Mammary epithelial cell (primary cell): ENCODE measurements at regions of chr7 and their contacts with region 1.

Region 1: GRCh38 chr7:142478479-142479072 is 220.7 kb upstream of the PRSS58 start:
- DNase-seq: peak; percentile 46
- H3K4me3 ChIP-seq: no peak overlapping the region
- H3K27ac ChIP-seq: no peak overlapping the region
- H3K4me1 ChIP-seq: peaks cover 21% of the 10 kb centered on the region
- H3K27me3 ChIP-seq: no peaks in the 10 kb centered on the region
- CTCF ChIP-seq: peak; percentile 71 to 76

Region 2: GRCh38 chr7:141874787-141875186 is 603.8 kb before region 1 on chr7:
- CTCF ChIA-PET with region 1: interaction called, 13 read pairs
- dilution Hi-C with region 1: no loop called
- in situ Hi-C with region 1: no loop called
- intact Hi-C with region 1: no loop called
- DNase-seq: peak; percentile 41
- H3K4me3 ChIP-seq: no peak overlapping the region
- H3K27ac ChIP-seq: no peak overlapping the region
- H3K4me1 ChIP-seq: no peaks in the 10 kb centered on the region
- H3K27me3 ChIP-seq: no peaks in the 10 kb centered on the region
- CTCF ChIP-seq: no peak

Region 3: GRCh38 chr7:142357953-142358520 is 120.5 kb before region 1 on chr7:
- CTCF ChIA-PET with region 1: no interaction called
- dilution Hi-C with region 1: no loop called
- in situ Hi-C with region 1: loop called in 1 of 2 experiments (anchors 10 kb)
- intact Hi-C with region 1: loop called (anchors 1 kb)
- DNase-seq: peak; percentile 65
- H3K4me3 ChIP-seq: no peak overlapping the region
- H3K27ac ChIP-seq: no peak overlapping the region
- H3K4me1 ChIP-seq: no peaks in the 10 kb centered on the region
- H3K27me3 ChIP-seq: no peaks in the 10 kb centered on the region
- CTCF ChIP-seq: peak; percentile 82 to 92

Region 4: DNA sequence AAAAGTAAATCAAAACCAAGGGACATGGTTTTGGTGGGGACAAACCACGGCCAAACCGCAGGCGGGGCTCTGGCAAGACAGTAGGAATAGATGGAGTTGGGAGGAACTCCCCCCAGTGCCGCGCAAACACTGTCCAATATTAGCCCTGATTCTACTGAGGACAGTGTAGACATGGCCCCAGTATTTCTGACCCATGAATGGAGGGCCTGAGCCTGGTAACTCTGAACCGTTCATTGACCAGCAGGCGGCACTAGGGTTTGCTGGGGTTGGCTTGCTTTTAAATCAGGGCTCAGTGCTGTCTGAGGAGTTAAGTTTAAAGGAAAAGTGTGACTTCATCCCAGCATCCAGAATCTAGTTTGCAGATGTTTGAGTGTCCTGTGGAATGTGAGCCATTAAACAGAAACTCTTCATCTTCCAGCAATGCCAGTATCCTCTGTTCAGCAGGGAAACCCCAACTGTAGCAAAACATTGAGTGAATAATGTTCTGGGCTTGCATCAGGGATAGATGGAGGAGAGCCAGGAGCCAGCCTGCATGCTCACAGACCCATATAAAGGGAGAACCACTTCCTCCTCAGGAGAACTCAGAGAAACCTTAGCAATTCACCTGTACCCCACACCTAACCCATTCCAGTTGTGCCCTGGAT is 73.3 kb before region 1 on chr7:
- CTCF ChIA-PET with region 1: no interaction called
- dilution Hi-C with region 1: no loop called
- in situ Hi-C with region 1: no loop called
- intact Hi-C with region 1: no loop called
- DNase-seq: no peak
- H3K4me3 ChIP-seq: no peak overlapping the region
- H3K27ac ChIP-seq: no peak overlapping the region
- H3K4me1 ChIP-seq: no peaks in the 10 kb centered on the region
- H3K27me3 ChIP-seq: no peaks in the 10 kb centered on the region
- CTCF ChIP-seq: no peak

Region 5: DNA sequence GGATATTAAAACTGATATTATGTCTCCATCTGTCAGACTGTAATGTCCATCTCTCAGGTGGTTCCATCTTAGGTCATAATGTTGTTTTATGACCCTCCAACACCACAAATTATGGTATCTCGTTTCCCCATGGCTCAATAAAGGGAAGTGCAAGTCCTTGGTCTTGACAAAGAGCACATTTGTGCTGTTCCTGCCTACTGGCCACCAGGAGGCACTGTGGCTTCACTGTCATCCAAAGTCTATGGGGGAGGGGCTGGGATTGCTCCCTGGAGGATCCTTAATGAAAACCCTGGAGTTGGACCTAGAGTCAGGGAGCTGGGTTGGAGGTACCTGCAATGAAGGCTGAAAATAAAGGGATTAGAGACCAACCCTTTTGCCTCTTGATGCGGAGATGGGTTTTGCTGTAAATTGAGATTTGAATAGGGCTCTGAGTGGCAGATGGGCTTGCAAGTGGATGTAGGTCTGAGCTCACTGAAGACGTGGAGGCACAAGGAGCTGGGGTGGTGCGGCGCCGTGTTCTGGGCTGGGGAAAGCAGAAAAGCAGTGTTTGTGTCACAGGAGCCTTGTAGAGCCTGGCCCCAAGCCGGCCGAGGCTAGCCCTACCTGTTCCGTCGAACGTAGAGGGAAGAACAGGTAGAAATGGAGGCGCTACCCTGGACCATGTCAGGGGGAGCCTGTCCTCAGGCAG is 40.2 kb before region 1 on chr7:
- CTCF ChIA-PET with region 1: interaction called, 7 read pairs
- dilution Hi-C with region 1: no loop called
- in situ Hi-C with region 1: no loop called
- intact Hi-C with region 1: loop called (anchors 5 kb)
- DNase-seq: peak; percentile 37
- H3K4me3 ChIP-seq: no peak overlapping the region
- H3K27ac ChIP-seq: no peak overlapping the region
- H3K4me1 ChIP-seq: peaks cover 19% of the 10 kb centered on the region
- H3K27me3 ChIP-seq: no peaks in the 10 kb centered on the region
- CTCF ChIP-seq: peak; percentile 79 to 97

Region 6: DNA sequence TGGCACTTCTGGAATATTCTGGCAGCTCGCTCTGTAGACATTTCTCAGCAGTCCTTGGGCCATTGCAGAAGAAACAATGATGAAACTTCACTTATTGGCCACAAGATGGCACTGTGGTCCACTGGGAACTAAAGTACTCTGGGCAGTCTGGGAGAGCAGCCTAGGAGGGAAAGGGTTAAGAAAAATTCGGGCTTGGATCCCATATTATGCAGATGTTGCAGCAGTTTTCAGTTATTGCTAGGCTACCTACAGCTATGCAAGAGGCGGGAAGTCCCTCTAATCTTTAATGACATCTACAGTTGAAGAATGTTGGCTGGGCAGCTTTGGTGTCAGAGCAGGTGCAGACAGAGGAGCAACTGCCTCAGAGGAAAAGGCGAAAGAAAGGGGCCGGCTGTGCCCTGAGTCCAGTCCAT is 19.0 kb before region 1 on chr7:
- CTCF ChIA-PET with region 1: interaction called, 3 read pairs
- dilution Hi-C with region 1: no loop called
- in situ Hi-C with region 1: no loop called
- intact Hi-C with region 1: loop called (anchors 1 kb)
- DNase-seq: peak; percentile 67
- H3K4me3 ChIP-seq: no peak overlapping the region
- H3K27ac ChIP-seq: no peak overlapping the region
- H3K4me1 ChIP-seq: peaks cover 19% of the 10 kb centered on the region
- H3K27me3 ChIP-seq: no peaks in the 10 kb centered on the region
- CTCF ChIP-seq: peak; percentile 70 to 77

Region 7: DNA sequence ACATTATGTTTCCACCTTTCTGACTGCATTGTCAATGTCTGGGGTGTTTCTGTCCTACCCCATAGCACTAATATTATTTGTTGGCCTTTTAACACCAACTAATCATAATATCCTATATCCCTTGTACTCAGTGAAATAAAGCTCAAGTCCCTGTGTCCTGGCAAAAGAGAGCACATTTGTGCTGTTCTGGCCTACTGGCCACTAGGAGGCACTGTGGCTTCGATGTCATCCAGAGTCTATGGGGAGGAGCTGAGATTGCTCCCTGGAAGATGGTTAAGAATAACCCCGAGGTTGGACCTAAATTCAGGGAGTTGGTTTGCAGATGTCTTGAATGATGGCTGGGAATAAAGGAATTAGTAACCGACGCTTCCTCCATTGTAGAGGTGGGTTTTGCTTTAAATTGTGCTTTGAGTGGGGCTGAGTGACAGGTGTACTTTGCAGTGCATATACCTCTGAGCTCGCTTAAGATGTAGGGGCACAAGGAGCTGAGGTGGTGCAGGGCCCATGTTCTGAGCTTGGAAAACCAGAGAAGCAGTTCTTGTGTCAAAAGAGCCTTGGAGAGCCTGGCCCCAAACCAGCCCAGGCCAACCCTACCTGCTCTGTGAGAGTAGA is 79.5 kb after region 1 on chr7:
- CTCF ChIA-PET with region 1: no interaction called
- dilution Hi-C with region 1: no loop called
- in situ Hi-C with region 1: no loop called
- intact Hi-C with region 1: no loop called
- DNase-seq: peak; percentile 28
- H3K4me3 ChIP-seq: no peak overlapping the region
- H3K27ac ChIP-seq: peak overlapping the region; percentile 88
- H3K4me1 ChIP-seq: peaks cover 42% of the 10 kb centered on the region
- H3K27me3 ChIP-seq: no peaks in the 10 kb centered on the region
- CTCF ChIP-seq: peak; percentile 70 to 93